Endothelial cell of umbilical vein (primary cell): ENCODE measurements at regions of chr7 and their contacts with region 1.

Region 1: GRCh38 chr7:143287935-143288826 is at the start of gene CASP2:
- DNase-seq: peak; percentile 99
- H3K4me3 ChIP-seq: peak within 1 kb of the TSS; percentile 81 to 97 (median 91)
- H3K27ac ChIP-seq: peak within 1 kb of the TSS; percentile 91
- H3K4me1 ChIP-seq: peaks cover 24% of the 10 kb centered on the region
- H3K27me3 ChIP-seq: no peaks in the 10 kb centered on the region
- CTCF ChIP-seq: peak in 1 of 2 donors; percentile 40
- POLR2A ChIP-seq: peak; percentile 67
- total RNA-seq, gene CASP2: 57.9 and 61.7 TPM in 2 replicates

Region 2: DNA sequence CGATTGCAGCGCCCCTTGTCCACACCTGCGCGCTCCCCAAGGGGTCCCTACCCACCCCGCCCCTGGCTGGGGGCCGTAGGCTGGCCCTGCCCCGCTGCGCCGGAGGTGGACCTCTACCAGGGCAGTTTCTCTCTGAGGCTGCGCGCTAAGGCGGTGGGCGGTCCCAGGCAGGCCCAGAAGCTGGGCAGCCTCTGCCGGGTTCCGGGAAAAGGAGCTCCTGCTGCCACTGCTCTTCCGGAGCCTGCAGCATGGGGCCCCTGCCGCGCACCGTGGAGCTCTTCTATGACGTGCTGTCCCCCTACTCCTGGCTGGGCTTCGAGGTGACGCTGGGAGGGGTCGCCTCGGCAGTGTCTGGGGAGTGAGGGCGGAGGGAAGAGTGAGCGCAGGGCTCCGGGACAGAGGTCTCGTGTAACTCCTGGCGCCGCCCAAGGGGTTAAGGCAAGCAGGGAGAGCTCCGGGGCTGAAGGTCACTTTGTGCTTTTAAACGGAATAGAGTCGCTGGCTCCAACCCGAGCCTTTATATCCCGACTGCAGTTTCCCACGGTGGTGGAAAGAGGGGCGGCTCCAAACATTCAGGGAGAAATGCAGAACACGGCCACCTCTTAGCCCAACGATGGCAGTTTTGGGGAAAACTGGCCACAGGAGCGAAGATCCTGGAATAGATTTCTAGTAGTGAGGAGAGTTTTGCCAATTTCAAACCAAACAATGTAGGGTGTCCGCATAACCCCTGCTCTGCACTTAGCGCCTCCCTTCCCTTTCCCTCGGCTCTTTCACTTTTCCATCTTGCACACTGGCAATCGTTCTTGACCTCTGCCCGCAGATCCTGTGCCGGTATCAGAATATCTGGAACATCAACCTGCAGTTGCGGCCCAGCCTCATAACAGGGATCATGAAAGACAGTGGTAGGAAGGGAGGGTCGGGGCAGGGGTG is 24.6 kb before region 1 on chr7 and contains the start of gene GSTK1:
- CTCF ChIA-PET with region 1: interaction called, 6 read pairs
- POLR2A ChIA-PET with region 1: interaction called, 5 read pairs
- dilution Hi-C with region 1: no loop called
- intact Hi-C with region 1: loop called (anchors 1 kb)
- DNase-seq: peak; percentile 76
- H3K4me3 ChIP-seq: peak within 1 kb of the TSS; percentile 45 to 87 (median 80)
- H3K27ac ChIP-seq: peak within 1 kb of the TSS; percentile 52
- H3K4me1 ChIP-seq: peaks cover 8% of the 10 kb centered on the region
- H3K27me3 ChIP-seq: no peaks in the 10 kb centered on the region
- CTCF ChIP-seq: no peak
- POLR2A ChIP-seq: peak; percentile 93
- total RNA-seq, gene GSTK1: 99.4 and 119 TPM in 2 replicates

Region 3: GRCh38 chr7:143299840-143300239 is 11.7 kb after region 1 on chr7:
- CTCF ChIA-PET with region 1: interaction called, 9 read pairs
- POLR2A ChIA-PET with region 1: interaction called, 7 read pairs
- dilution Hi-C with region 1: no loop called
- intact Hi-C with region 1: loop called (anchors 1 kb)
- DNase-seq: peak; percentile 29
- H3K4me3 ChIP-seq: no peak overlapping the region
- H3K27ac ChIP-seq: no peak overlapping the region
- H3K4me1 ChIP-seq: peaks cover 23% of the 10 kb centered on the region
- H3K27me3 ChIP-seq: no peaks in the 10 kb centered on the region
- CTCF ChIP-seq: peak; percentile 54 to 69
- POLR2A ChIP-seq: no peak

Region 4: GRCh38 chr7:143499246-143499645 is 211.1 kb after region 1 on chr7:
- CTCF ChIA-PET with region 1: no interaction called
- POLR2A ChIA-PET with region 1: no interaction called
- dilution Hi-C with region 1: no loop called
- intact Hi-C with region 1: loop called (anchors 2 kb)
- DNase-seq: peak; percentile 97
- H3K4me3 ChIP-seq: peak overlapping the region in 1 of 3 experiments; percentile 31
- H3K27ac ChIP-seq: peak overlapping the region; percentile 99
- H3K4me1 ChIP-seq: peaks cover 51% of the 10 kb centered on the region
- H3K27me3 ChIP-seq: no peaks in the 10 kb centered on the region
- CTCF ChIP-seq: no peak
- POLR2A ChIP-seq: peak; percentile 61